ENCODE measurements at regions of chr11 and their contacts with region 1.

Region 1: GRCh38 chr11:64204464-64204989 is 2.0 kb upstream of the FERMT3 start:
- DNase-seq: peak; percentile 90
- ATAC-seq: peak; percentile 30
- H3K4me3 Mint-ChIP-seq: peak overlapping the region; percentile 33
- H3K27ac Mint-ChIP-seq: peak overlapping the region; percentile 79
- H3K4me1 Mint-ChIP-seq: peaks cover 41% of the 10 kb centered on the region
- H3K27me3 Mint-ChIP-seq: no peaks in the 10 kb centered on the region

Region 2: GRCh38 chr11:63974259-63975143 is 230.0 kb before region 1 on chr11 and contains the start of gene COX8A:
- CTCF ChIA-PET with region 1: no interaction called
- POLR2A ChIA-PET with region 1: no interaction called
- intact Hi-C with region 1: loop called in 1 of 2 experiments (anchors 1 kb)
- DNase-seq: peak; percentile 97
- ATAC-seq: peak; percentile 100
- H3K4me3 Mint-ChIP-seq: peak within 1 kb of the TSS; percentile 95
- H3K27ac Mint-ChIP-seq: peak within 1 kb of the TSS; percentile 97
- H3K4me1 Mint-ChIP-seq: peaks cover 20% of the 10 kb centered on the region
- H3K27me3 Mint-ChIP-seq: no peaks in the 10 kb centered on the region
- total RNA-seq, gene COX8A: 413 to 454 TPM

Region 3: DNA sequence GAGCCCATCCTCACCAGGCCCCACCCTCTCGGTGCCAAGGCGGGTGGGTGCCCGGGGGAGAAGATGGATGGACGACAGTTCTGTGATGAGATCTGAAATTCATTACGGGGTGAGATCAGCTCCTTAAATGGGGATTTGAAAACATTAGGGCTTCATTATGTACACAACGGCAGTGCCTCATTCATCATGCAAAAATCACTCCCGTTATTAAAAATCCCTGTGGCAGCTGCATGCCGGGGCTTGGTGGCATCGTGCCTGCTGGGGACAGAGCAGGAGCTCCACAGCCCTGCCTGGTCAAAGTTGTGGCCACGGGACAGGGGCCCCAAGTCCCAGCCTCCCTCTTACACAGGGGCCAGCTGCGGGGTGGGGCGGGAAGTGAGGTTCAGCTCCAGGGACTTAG is 198.1 kb before region 1 on chr11:
- CTCF ChIA-PET with region 1: no interaction called
- POLR2A ChIA-PET with region 1: no interaction called
- intact Hi-C with region 1: no loop called
- DNase-seq: no peak
- ATAC-seq: no peak
- H3K4me3 Mint-ChIP-seq: no peak overlapping the region
- H3K27ac Mint-ChIP-seq: no peak overlapping the region
- H3K4me1 Mint-ChIP-seq: peaks cover 6% of the 10 kb centered on the region
- H3K27me3 Mint-ChIP-seq: peaks cover 25% of the 10 kb centered on the region

Region 4: GRCh38 chr11:64122411-64123410 is 81.8 kb before region 1 on chr11:
- CTCF ChIA-PET with region 1: no interaction called
- POLR2A ChIA-PET with region 1: no interaction called
- intact Hi-C with region 1: no loop called
- DNase-seq: no peak
- ATAC-seq: no peak
- H3K4me3 Mint-ChIP-seq: no peak overlapping the region
- H3K27ac Mint-ChIP-seq: no peak overlapping the region
- H3K4me1 Mint-ChIP-seq: peaks cover 15% of the 10 kb centered on the region
- H3K27me3 Mint-ChIP-seq: no peaks in the 10 kb centered on the region

Region 5: GRCh38 chr11:64216879-64217278 is 12.4 kb after region 1 on chr11:
- CTCF ChIA-PET with region 1: interaction called, 12 read pairs
- POLR2A ChIA-PET with region 1: interaction called, 10 read pairs
- intact Hi-C with region 1: no loop called
- DNase-seq: no peak
- ATAC-seq: no peak
- H3K4me3 Mint-ChIP-seq: no peak overlapping the region
- H3K27ac Mint-ChIP-seq: no peak overlapping the region
- H3K4me1 Mint-ChIP-seq: peaks cover 10% of the 10 kb centered on the region
- H3K27me3 Mint-ChIP-seq: no peaks in the 10 kb centered on the region

Region 6: GRCh38 chr11:64240394-64241174 is 36.1 kb after region 1 on chr11 and contains the start of gene FKBP2:
- CTCF ChIA-PET with region 1: interaction called, 5 read pairs
- POLR2A ChIA-PET with region 1: interaction called, 8 read pairs
- intact Hi-C with region 1: loop called (anchors 1 to 5 kb)
- DNase-seq: peak; percentile 99
- ATAC-seq: peak; percentile 68
- H3K4me3 Mint-ChIP-seq: peak within 1 kb of the TSS; percentile 86
- H3K27ac Mint-ChIP-seq: peak within 1 kb of the TSS; percentile 99
- H3K4me1 Mint-ChIP-seq: peaks cover 31% of the 10 kb centered on the region
- H3K27me3 Mint-ChIP-seq: no peaks in the 10 kb centered on the region
- total RNA-seq, gene FKBP2: 19.9 to 21.3 TPM

Region 7: GRCh38 chr11:64269380-64270234 is 65.1 kb after region 1 on chr11:
- CTCF ChIA-PET with region 1: interaction called, 5 read pairs
- POLR2A ChIA-PET with region 1: interaction called, 7 read pairs
- intact Hi-C with region 1: loop called in 1 of 2 experiments (anchors 1 kb)
- DNase-seq: peak; percentile 98
- ATAC-seq: peak; percentile 82
- H3K4me3 Mint-ChIP-seq: peak overlapping the region; percentile 98
- H3K27ac Mint-ChIP-seq: peak overlapping the region; percentile 96
- H3K4me1 Mint-ChIP-seq: peaks cover 19% of the 10 kb centered on the region
- H3K27me3 Mint-ChIP-seq: no peaks in the 10 kb centered on the region

Measured in activated CD4-positive, alpha-beta T cell treated with anti-CD3 and anti-CD28 coated beads for 36 hours (primary cell).